CD4-positive, alpha-beta T cell (primary cell): ENCODE measurements at regions of chr5 and their contacts with region 1.

Region 1: DNA sequence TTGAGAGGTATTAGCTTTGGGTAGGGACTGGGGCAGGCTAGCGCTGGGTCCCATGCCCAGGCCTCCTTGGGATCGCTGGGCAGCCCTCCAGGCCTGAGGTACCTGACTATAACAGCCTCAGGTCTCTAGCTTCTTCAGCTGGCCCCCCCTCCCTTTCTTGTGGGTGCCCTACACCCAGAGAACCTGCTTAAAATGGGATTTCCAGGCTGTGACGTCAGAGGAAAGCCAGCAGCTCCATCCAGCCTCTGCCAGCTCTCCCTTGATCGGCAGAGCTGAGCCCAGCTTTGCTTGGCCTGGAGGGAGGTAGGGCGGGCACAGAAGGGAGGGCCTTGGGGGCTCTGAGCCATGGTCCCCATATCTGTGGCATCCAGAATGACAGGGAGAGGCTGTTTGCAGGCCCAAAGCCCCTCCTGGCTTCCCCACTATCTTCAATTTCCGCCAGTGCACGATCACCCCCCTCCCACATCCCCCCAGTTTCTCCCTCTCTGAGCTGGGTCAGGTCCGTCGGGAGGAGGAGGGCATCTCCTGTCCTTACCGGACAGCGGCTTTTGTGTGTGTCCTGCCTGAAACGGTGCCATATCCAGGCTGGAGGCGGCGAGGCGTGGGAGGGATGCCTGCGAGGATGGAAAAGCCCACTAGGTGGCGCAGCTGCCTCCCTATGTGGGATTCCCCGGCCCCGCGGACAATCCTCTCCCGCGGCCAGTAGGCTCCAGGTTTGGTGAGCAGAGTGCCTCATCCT is 10.8 kb downstream of the REEP2 start:
- DNase-seq: peak; percentile 56 to 87 (median 67)
- ATAC-seq: peak; percentile 87
- H3K4me3 ChIP-seq: no peak overlapping the region
- H3K4me3 Mint-ChIP-seq: no peak overlapping the region
- H3K27ac ChIP-seq: no peak overlapping the region
- H3K27ac Mint-ChIP-seq: peak overlapping the region; percentile 54
- H3K4me1 ChIP-seq: peaks cover 10% of the 10 kb centered on the region
- H3K4me1 Mint-ChIP-seq: peaks cover 6% of the 10 kb centered on the region
- H3K27me3 ChIP-seq: no peaks in the 10 kb centered on the region
- H3K27me3 Mint-ChIP-seq: no peaks in the 10 kb centered on the region
- CTCF ChIP-seq: peak; percentile 94

Region 2: DNA sequence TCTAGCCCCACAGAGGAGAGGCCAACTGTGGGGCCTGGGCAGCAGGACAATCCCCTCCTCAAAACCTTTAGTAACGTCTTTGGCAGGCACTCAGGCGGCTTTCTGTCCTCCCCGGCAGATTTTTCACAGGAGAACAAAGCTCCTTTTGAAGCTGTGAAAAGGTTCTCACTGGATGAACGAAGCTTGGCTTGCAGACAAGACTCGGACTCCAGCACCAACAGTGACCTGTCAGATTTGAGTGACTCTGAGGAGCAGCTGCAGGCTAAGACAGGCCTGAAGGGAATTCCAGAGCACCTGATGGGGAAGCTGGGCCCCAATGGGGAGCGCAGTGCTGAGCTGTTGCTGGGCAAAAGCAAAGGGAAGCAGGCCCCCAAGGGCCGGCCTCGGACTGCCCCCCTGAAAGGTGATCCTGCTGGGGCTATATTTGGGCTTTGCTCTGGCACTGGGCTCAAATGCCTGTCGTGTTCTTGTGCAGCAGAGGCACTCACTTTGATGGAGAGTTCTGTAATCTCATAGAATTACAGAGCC is 57.7 kb before region 1 on chr5:
- CTCF ChIA-PET with region 1: no interaction called
- POLR2A ChIA-PET with region 1: no interaction called
- intact Hi-C with region 1: no loop called
- DNase-seq: no peak
- ATAC-seq: no peak
- H3K4me3 ChIP-seq: no peak overlapping the region
- H3K4me3 Mint-ChIP-seq: no peak overlapping the region
- H3K27ac ChIP-seq: no peak overlapping the region
- H3K27ac Mint-ChIP-seq: no peak overlapping the region
- H3K4me1 ChIP-seq: no peaks in the 10 kb centered on the region
- H3K4me1 Mint-ChIP-seq: no peaks in the 10 kb centered on the region
- H3K27me3 ChIP-seq: no peaks in the 10 kb centered on the region
- H3K27me3 Mint-ChIP-seq: no peaks in the 10 kb centered on the region
- CTCF ChIP-seq: no peak

Region 3: DNA sequence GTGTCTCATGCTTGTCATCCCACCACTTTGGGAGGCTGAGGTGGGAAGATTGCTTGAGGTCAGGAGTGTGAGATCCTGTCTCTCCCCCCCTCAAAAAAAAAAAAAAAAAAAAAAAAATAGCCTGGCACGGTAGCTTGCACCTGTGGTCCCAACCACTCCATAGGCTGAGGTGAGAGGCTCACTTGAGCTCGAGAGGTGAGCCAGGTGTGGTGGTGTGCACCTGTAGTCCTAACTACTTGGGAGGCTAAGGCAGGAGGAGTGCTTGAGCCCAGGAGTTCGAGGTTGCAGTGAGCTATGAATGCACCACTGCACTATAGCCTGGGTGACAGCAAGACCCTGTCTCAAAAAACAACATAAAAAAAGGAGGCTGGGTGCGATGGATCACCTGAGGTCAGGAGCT is 103.0 kb after region 1 on chr5:
- CTCF ChIA-PET with region 1: interaction called, 13 read pairs
- POLR2A ChIA-PET with region 1: no interaction called
- intact Hi-C with region 1: no loop called
- DNase-seq: no peak
- ATAC-seq: no peak
- H3K4me3 ChIP-seq: no peak overlapping the region
- H3K4me3 Mint-ChIP-seq: no peak overlapping the region
- H3K27ac ChIP-seq: peak overlapping the region in 1 of 2 donors; percentile 10
- H3K27ac Mint-ChIP-seq: no peak overlapping the region
- H3K4me1 ChIP-seq: peaks cover 8% of the 10 kb centered on the region
- H3K4me1 Mint-ChIP-seq: peaks cover 26% of the 10 kb centered on the region
- H3K27me3 ChIP-seq: no peaks in the 10 kb centered on the region
- H3K27me3 Mint-ChIP-seq: no peaks in the 10 kb centered on the region
- CTCF ChIP-seq: no peak